ENCODE measurements at regions of chr2 and their contacts with region 1.

Region 1: DNA sequence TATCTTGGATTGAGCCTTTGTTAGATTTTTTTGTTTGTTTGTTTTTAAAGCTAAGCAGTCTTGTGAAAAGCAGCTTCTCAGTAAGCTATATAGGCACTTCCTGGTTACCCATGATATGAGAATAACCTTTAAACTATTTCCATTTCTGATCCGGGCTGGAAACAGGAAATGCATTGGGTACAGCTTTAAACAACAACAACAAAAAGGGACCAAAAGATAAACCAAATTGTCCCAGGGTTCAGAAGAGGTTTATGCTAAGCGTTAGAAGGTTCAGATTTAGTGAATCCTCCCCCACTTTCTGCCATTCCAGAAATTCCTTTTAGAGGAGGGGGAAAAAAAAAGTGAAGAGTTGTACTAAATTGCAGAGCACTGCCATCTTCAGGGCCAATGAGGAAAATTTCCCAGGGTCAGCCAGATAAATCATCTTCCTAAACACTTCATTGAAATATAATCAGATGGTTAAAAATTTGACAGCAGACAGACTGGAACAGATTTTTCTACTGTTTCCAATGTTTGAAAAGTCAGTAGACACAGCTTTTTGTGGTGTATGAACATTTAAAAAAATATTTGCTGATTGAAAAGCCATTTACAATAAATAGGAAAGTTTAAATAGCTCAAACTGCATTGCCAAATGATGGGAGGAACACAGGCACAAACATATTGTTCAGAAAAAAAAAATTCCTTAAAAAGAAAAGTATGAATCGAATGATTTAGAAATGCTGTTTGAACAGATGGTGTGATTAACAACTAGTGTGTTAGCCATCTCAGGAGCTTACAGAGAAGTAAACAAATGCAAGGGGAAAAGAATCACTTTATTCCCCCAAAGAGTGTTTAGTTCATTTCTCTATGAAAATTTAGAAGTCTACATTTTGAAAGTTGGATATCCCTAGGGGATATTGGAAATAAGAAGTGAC is 189.9 kb upstream of the TANK start:
- DNase-seq: peak; percentile 55
- ATAC-seq: peak; percentile 79
- H3K4me3 ChIP-seq: no peak overlapping the region
- H3K27ac ChIP-seq: no peak overlapping the region
- H3K4me1 ChIP-seq: peaks cover 0 to 4% of the 10 kb centered on the region in 2 experiments; a peak in 3 of 4 replicates
- H3K27me3 ChIP-seq: no peaks in the 10 kb centered on the region
- CTCF ChIP-seq: peak; percentile 61 to 81 (median 71)
- POLR2A ChIP-seq: no peak
- RAD21 ChIP-seq: peak; percentile 87

Region 2: DNA sequence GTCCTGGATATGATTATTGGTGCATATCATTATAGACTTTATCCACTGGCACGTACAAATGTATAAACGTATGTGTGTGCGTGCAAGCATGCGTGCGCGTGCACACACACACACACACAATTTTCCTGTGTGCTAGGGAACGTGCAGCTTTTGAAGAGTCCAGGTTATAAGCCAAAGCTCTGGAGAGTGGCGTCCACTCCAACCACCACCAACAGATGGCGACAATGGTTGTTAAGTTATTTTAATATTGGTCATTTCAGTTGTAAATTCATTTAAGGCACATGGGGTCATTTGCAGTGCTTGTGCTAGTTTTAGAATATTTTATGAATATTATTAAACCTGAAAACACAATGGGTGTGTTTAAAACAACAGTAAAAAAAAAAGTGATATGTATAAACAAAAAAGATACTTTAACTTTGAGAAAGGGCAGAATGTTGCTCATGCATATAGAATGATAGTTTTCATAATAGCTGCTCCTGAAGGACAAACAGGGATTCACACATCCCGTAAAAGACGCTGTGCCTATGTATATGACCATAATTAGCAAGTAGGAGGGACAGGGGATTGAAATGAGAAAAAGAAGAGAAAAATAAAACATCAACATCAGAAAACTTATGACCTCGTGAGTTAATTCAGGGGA is 646.0 kb before region 1 on chr2:
- CTCF ChIA-PET with region 1: interaction called, 23 read pairs
- POLR2A ChIA-PET with region 1: no interaction called
- RAD21 ChIA-PET with region 1: no interaction called
- intact Hi-C with region 1: loop called (anchors 1 kb)
- DNase-seq: peak; percentile 26
- ATAC-seq: peak; percentile 87
- H3K4me3 ChIP-seq: no peak overlapping the region
- H3K27ac ChIP-seq: no peak overlapping the region
- H3K4me1 ChIP-seq: no peaks in the 10 kb centered on the region
- H3K27me3 ChIP-seq: no peaks in the 10 kb centered on the region
- CTCF ChIP-seq: peak; percentile 61 to 75 (median 74); a peak in 5 of 6 replicates
- POLR2A ChIP-seq: no peak
- RAD21 ChIP-seq: peak; percentile 76

Region 3: GRCh38 chr2:160353166-160353565 is 617.1 kb before region 1 on chr2:
- CTCF ChIA-PET with region 1: interaction called, 4 read pairs
- POLR2A ChIA-PET with region 1: no interaction called
- RAD21 ChIA-PET with region 1: no interaction called
- intact Hi-C with region 1: loop called (anchors 1 kb)
- DNase-seq: no peak
- ATAC-seq: peak; percentile 82
- H3K4me3 ChIP-seq: no peak overlapping the region
- H3K27ac ChIP-seq: no peak overlapping the region
- H3K4me1 ChIP-seq: no peaks in the 10 kb centered on the region
- H3K27me3 ChIP-seq: no peaks in the 10 kb centered on the region
- CTCF ChIP-seq: peak; percentile 32 to 52 (median 42); a peak in 4 of 6 replicates
- POLR2A ChIP-seq: no peak
- RAD21 ChIP-seq: peak; percentile 69

Measured in HCT116 (cell line).